SK-N-SH (cell line): ENCODE measurements at regions of chr17 and their contacts with region 1.

Region 1: DNA sequence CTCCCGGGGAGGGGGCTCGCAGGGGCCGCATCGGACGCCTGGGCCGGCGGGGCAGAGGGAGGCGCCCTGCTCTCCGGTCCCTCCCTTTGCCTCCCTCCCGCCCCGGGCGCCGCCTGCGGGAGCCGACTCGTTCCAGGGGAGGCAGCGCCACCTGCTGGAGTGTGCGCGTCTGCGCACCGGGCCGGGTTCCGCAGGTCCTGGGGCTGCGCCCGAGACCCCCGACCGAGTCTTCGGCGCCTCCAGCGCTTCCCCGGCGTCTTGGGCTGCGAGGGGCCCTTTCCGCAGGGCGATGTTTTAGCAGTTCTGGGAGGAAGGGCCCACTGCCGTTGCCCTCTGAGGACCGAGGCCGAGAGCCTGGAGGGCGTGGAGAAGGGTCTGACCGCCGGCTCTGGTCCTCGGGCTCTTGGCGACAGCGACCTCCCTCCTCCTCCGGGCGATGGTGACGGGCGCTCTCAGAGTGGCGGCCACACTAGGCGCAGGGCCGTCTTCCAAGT is 106.3 kb downstream of the SEC14L1 start:
- DNase-seq: peak; percentile 98
- H3K4me3 ChIP-seq: peak overlapping the region; percentile 47 to 80
- H3K27ac ChIP-seq: no peak overlapping the region; a peak in 1 of 4 replicates
- H3K4me1 ChIP-seq: peaks cover 0 to 6% of the 10 kb centered on the region in 2 experiments; a peak in 1 of 4 replicates
- H3K27me3 ChIP-seq: no peaks in the 10 kb centered on the region
- CTCF ChIP-seq: peak; percentile 98
- EP300 ChIP-seq: no peak
- RAD21 ChIP-seq: peak; percentile 86

Region 2: GRCh38 chr17:76924345-76925342 is 322.5 kb before region 1 on chr17:
- CTCF ChIA-PET with region 1: no interaction called
- POLR2A ChIA-PET with region 1: no interaction called
- DNase-seq: peak; percentile 69
- H3K4me3 ChIP-seq: no peak overlapping the region
- H3K27ac ChIP-seq: no peak overlapping the region
- H3K4me1 ChIP-seq: peaks cover 0 to 12% of the 10 kb centered on the region in 2 experiments; a peak in 1 of 4 replicates
- H3K27me3 ChIP-seq: no peaks in the 10 kb centered on the region
- CTCF ChIP-seq: no peak
- EP300 ChIP-seq: no peak
- RAD21 ChIP-seq: no peak

Region 3: GRCh38 chr17:77076124-77076872 is 170.8 kb before region 1 on chr17:
- CTCF ChIA-PET with region 1: interaction called, 10 read pairs
- POLR2A ChIA-PET with region 1: no interaction called
- DNase-seq: no peak
- H3K4me3 ChIP-seq: no peak overlapping the region
- H3K27ac ChIP-seq: no peak overlapping the region
- H3K4me1 ChIP-seq: no peaks in the 10 kb centered on the region; a peak in 1 of 4 replicates
- H3K27me3 ChIP-seq: peaks cover 29% of the 10 kb centered on the region
- CTCF ChIP-seq: no peak
- EP300 ChIP-seq: no peak
- RAD21 ChIP-seq: no peak

Region 4: DNA sequence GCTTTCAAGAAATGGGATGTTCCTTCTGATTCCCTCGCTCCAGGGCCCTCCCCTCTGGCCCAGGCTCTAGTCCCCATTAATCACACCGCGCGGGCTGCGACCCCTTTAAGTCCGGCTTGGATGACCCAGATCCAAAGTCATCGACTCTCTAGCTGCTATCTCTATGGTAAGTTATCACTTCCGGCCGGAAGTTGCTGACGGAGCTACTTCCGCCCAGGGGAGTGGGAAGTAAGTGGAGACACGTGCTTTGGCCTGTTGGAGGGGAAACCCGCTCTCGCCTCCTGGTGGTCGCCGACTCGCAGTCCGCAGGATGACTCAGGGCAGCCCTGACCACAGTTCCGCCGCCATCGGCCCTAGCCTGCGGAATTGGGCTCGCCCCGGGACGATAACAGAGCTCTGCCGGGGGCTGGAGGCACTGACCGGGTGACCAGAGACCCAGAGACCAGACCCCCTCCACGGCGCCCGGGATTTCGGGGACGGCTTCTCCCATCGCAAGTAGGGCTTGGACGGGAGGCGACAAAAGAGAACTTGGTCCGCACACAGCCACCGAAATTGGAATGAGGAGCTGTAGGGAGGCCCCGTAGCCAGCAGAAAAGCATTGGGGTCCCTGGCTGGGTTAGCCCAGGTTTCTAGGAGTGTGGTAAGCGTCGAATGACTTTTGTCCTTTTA is 158.5 kb before region 1 on chr17:
- CTCF ChIA-PET with region 1: interaction called, 99 read pairs
- POLR2A ChIA-PET with region 1: interaction called, 6 read pairs
- DNase-seq: peak; percentile 93
- H3K4me3 ChIP-seq: peak overlapping the region; percentile 69 to 85
- H3K27ac ChIP-seq: peak overlapping the region; percentile 85 to 87
- H3K4me1 ChIP-seq: peaks cover 5 to 25% of the 10 kb centered on the region in 2 experiments; a peak in 1 of 4 replicates
- H3K27me3 ChIP-seq: no peaks in the 10 kb centered on the region
- CTCF ChIP-seq: peak; percentile 79
- EP300 ChIP-seq: peak in 1 of 2 experiments; percentile 16; a peak in 1 of 4 replicates
- RAD21 ChIP-seq: peak; percentile 48

Region 5: DNA sequence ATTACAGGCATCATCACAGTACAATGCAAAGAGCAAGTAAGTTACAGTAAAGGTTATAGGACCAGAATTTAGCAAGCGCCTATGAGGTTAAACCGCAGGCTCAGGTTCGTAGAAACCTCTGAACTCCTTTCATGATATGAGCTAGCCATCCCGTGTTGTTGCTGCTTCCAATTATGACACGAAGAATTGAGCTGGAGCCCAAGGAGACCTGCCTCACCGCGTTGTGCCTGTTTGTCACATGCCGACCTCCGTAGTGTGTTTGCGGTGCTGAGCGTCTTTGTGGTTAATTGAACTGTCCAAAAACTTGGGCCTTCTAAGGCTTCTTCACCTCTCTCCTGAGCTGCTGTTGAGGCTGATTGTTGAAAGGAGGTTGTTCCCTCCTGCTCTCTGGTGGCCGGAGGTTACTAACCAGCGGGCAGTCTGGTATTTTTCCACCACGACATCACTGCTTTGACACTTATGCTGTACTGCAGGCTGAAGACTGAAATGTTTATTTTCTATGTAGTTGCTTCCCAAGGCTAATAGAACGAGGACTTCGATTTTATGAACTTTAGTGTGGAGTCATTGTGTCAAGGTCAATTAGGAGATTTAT is 38.8 kb before region 1 on chr17:
- CTCF ChIA-PET with region 1: interaction called, 10 read pairs
- POLR2A ChIA-PET with region 1: no interaction called
- DNase-seq: no peak
- H3K4me3 ChIP-seq: no peak overlapping the region
- H3K27ac ChIP-seq: peak overlapping the region in 1 of 2 experiments; percentile 33; a peak in 3 of 4 replicates
- H3K4me1 ChIP-seq: peaks cover 10 to 12% of the 10 kb centered on the region in 2 experiments; a peak in 2 of 4 replicates
- H3K27me3 ChIP-seq: no peaks in the 10 kb centered on the region
- CTCF ChIP-seq: peak; percentile 54
- EP300 ChIP-seq: no peak
- RAD21 ChIP-seq: peak; percentile 33; the same call in 1 of the 2 replicates

Region 6: DNA sequence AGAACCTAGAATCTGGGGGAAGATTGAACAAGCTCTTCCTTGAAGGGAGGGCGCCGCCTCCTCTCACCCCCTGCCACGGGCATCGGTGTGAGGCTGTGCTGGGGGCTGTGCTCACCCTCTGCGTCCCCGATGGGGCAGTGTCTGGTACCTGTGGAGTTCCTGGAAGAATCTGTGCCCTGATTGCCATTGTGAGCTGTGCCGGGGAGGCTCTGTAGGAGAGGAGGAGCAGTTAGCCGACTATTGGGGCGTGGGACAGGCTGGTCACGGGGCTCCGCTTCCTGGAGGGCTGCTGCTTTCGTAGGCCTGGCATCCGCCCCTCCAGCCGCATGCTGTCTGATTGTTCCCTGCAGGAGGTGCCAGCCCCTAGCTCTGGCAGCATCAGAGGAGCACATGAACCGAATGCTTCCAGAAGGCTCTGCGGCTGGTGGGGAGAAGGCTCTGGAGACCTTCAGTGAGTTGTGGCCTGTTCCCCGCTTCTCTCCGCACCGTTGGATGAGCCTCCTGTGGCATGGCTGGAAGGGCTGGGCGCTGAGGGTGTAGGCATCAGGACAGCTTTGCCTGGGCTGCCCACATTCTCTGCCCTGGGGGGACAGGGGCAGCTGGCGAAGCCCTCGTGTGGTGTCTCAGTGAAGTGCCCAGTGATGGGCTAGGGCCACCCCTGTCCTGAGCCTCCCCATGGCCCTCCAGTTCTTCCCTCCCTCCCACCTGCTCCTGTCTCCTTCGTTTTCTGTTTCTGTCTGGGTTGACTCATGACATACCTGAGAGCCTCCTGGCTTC is 19.4 kb before region 1 on chr17:
- CTCF ChIA-PET with region 1: interaction called, 15 read pairs
- POLR2A ChIA-PET with region 1: interaction called, 3 read pairs
- DNase-seq: no peak
- H3K4me3 ChIP-seq: no peak overlapping the region
- H3K27ac ChIP-seq: no peak overlapping the region
- H3K4me1 ChIP-seq: no peaks in the 10 kb centered on the region; a peak in 1 of 4 replicates
- H3K27me3 ChIP-seq: no peaks in the 10 kb centered on the region
- CTCF ChIP-seq: no peak
- EP300 ChIP-seq: no peak
- RAD21 ChIP-seq: no peak

Region 7: GRCh38 chr17:77273397-77274085 is 26.4 kb after region 1 on chr17:
- CTCF ChIA-PET with region 1: interaction called, 17 read pairs
- POLR2A ChIA-PET with region 1: no interaction called
- DNase-seq: peak; percentile 7
- H3K4me3 ChIP-seq: no peak overlapping the region
- H3K27ac ChIP-seq: no peak overlapping the region
- H3K4me1 ChIP-seq: peaks cover 0 to 9% of the 10 kb centered on the region in 2 experiments; a peak in 1 of 4 replicates
- H3K27me3 ChIP-seq: no peaks in the 10 kb centered on the region
- CTCF ChIP-seq: no peak
- EP300 ChIP-seq: no peak
- RAD21 ChIP-seq: no peak